ENCODE measurements at regions of chr4 and their contacts with region 1.

Region 1: GRCh38 chr4:77203380-77204197 is 46.6 kb downstream of the CCNG2 start:
- DNase-seq: peak; percentile 36 to 74
- ATAC-seq: peak; percentile 81 to 92
- H3K4me3 ChIP-seq: no peak overlapping the region
- H3K27ac ChIP-seq: no peak overlapping the region
- H3K4me1 ChIP-seq: no peaks in the 10 kb centered on the region
- CTCF ChIP-seq: peak; percentile 60
- EP300 ChIP-seq: no peak
- POLR2A ChIP-seq: no peak
- RAD21 ChIP-seq: peak; percentile 75 to 79

Region 2: DNA sequence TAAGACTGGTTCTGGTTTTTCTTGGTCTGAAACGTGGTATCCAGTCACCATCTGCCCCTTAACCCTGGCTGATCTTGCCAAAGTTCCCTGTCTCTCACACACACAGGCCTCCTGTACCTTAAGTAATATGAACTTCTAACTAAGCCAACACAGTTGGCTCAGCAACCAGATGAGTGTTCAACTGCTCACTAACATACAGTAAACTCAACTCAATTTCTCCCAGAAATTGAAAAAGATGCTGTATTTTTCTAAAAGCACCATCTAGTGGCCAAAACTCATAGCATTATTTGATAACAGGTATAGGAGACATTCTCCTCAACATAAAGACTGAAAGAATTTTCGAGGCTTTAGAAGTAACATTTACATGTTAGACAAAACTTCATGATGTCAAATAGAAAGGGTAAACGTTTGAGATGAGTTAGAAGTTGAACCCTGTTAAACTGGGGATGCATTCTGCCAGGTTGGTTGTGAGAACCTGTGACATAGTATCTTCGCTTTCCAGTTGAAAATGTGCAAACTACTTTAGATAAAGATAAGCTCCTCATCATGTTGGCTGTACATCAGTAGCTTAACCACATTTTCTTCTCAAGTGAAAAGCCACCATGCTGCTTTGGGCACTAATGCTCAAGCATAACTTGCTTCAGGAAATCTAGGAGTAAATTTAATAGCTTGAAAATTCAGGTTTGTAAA is 159.0 kb before region 1 on chr4:
- CTCF ChIA-PET with region 1: interaction called, 26 read pairs
- POLR2A ChIA-PET with region 1: no interaction called
- DNase-seq: peak in 1 of 2 experiments; percentile 8
- ATAC-seq: peak; percentile 52 to 73; a peak in 4 of 6 replicates
- H3K4me3 ChIP-seq: no peak overlapping the region
- H3K27ac ChIP-seq: no peak overlapping the region
- H3K4me1 ChIP-seq: 0 out of 3 replicates have a peak, but pooled peaks cover 7% of the 10 kb centered on the region
- CTCF ChIP-seq: peak; percentile 60
- EP300 ChIP-seq: no peak
- POLR2A ChIP-seq: no peak
- RAD21 ChIP-seq: peak; percentile 26 to 42; a peak in 4 of 5 replicates

Region 3: DNA sequence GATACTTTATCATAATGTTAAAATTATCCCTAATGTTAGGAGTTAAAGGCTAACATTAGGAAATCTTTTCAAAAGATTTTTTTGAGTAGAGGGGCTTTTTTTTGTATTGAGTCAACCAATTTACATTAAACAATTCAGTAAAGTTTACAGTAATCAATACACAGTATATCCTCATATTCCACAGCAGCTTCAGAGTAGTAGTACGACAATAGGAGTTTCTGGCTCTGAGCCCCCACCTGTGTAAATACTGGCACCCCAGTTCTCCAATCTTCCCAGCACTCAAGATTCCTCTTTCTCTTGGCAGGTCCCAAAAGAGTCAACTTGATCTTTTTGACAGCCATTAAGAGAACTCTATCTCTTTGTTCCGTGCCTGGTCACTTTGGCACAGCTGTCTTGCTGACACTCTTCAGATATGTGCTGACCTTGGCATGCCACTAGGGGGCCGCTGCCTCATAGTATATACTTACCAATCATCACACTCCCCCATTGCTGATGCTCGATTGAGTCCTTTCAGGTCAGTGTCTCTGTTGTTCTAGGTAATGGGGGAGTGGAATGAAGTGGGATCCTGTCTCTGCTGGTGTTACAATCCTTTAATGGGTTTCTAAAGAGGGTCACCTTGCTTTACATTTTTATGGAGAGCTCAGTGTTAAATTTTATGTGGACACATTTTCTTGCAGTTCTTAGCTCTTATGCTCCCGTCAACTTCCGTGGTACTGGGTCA is 108.3 kb before region 1 on chr4:
- CTCF ChIA-PET with region 1: interaction called, 39 read pairs
- POLR2A ChIA-PET with region 1: no interaction called
- DNase-seq: peak; percentile 33 to 60
- ATAC-seq: peak; percentile 95 to 100
- H3K4me3 ChIP-seq: no peak overlapping the region
- H3K27ac ChIP-seq: no peak overlapping the region
- H3K4me1 ChIP-seq: no peaks in the 10 kb centered on the region
- CTCF ChIP-seq: peak; percentile 63
- EP300 ChIP-seq: no peak
- POLR2A ChIP-seq: no peak
- RAD21 ChIP-seq: peak; percentile 58 to 62

Region 4: DNA sequence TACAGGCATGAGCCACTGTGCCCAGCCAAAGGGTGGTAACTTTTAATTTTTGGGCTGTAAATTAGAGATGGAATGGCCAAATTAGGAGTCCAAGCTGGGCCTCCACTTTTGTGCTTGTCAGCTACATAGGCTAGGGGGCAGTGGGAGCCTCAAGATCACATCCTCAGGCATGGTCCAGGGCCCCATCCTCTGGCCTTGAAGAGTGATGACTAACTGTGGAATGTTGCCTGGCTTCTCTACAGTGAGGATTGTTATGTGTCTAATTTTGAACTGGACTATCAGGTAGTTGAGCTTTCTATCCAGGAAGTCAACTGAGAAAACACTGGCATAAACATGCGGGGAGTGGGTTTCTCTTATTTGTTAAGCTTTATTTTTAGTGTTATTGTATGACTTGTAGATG is 13.5 kb before region 1 on chr4:
- CTCF ChIA-PET with region 1: interaction called, 15 read pairs
- POLR2A ChIA-PET with region 1: no interaction called
- DNase-seq: no peak
- ATAC-seq: no peak
- H3K4me3 ChIP-seq: no peak overlapping the region
- H3K27ac ChIP-seq: no peak overlapping the region
- H3K4me1 ChIP-seq: no peaks in the 10 kb centered on the region
- CTCF ChIP-seq: no peak
- EP300 ChIP-seq: no peak
- POLR2A ChIP-seq: no peak
- RAD21 ChIP-seq: no peak

Region 5: GRCh38 chr4:77454858-77455257 is 251.3 kb after region 1 on chr4:
- CTCF ChIA-PET with region 1: no interaction called
- POLR2A ChIA-PET with region 1: no interaction called
- DNase-seq: no peak
- ATAC-seq: no peak
- H3K4me3 ChIP-seq: no peak overlapping the region
- H3K27ac ChIP-seq: no peak overlapping the region
- H3K4me1 ChIP-seq: no peaks in the 10 kb centered on the region
- CTCF ChIP-seq: no peak
- EP300 ChIP-seq: no peak
- POLR2A ChIP-seq: no peak
- RAD21 ChIP-seq: no peak